ENCODE measurements at regions of chr7 and their contacts with region 1.

Region 1: GRCh38 chr7:97179454-97180104 is 62.1 kb downstream of the SDHAF3 start:
- DNase-seq: peak in 1 of 2 donors; percentile 34
- ATAC-seq: peak in 1 of 8 donors; percentile 60
- H3K4me3 ChIP-seq: no peak overlapping the region
- H3K27ac ChIP-seq: no peak overlapping the region
- H3K4me1 ChIP-seq: peaks cover 0 to 7% (median 0%) of the 10 kb centered on the region in 9 donors
- H3K27me3 ChIP-seq: no peaks in the 10 kb centered on the region
- CTCF ChIP-seq: peak; percentile 51 to 91 (median 84)

Region 2: DNA sequence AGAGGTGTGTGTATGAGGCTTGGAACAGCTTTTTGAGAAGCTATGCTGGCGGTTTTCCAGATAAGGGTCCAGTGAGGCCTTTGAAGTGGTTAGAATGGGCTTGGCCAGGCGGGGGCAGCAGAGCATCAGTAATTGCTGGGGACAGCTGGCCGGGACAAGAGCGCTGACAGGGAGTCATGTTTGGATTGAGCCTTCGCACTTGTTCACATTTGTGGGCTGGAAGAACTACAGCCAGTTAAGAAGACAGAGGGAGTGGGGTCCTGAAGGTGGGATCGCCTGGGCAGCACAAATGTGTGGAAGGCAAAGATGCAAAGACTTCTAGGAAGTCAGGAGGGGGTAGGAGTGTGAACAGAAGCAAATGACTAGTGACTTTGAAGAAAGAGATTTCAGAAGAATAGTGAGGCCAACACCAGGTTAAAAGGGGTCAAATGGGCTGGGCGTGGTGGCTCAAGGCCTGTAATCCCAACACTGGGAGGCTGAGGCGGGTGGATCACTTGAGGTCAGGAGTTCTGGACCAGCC is 74.8 kb before region 1 on chr7:
- intact Hi-C with region 1: loop called (anchors 1 to 5 kb)
- DNase-seq: peak; percentile 87 to 88
- ATAC-seq: peak; percentile 87 to 98 (median 91)
- H3K4me3 ChIP-seq: no peak overlapping the region
- H3K27ac ChIP-seq: no peak overlapping the region
- H3K4me1 ChIP-seq: peaks cover 0 to 10% (median 0%) of the 10 kb centered on the region in 9 donors
- H3K27me3 ChIP-seq: peaks cover 0 to 5% (median 4%) of the 10 kb centered on the region in 7 donors
- CTCF ChIP-seq: peak; percentile 63 to 90 (median 80)

Region 3: DNA sequence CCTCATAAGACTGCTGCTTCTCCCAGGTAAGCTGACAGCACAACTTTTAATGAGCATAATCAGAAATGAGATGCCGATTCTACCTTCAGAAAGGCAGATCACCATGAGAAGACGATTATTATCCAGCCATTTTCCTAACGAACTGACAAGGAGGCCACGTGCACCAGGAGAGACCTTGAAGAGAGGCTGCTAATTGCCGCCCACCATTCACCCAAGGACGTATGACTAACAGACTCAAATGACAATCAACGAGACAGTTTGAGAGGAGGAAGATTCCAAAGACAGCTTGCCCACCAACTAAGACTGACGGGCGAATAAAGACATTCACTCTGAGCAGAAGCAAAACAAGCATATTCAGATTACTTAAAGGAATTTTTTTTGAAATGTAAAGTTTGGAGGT is 250.4 kb after region 1 on chr7:
- intact Hi-C with region 1: no loop called
- DNase-seq: no peak
- ATAC-seq: no peak
- H3K4me3 ChIP-seq: no peak overlapping the region
- H3K27ac ChIP-seq: no peak overlapping the region
- H3K4me1 ChIP-seq: no peaks in the 10 kb centered on the region
- H3K27me3 ChIP-seq: no peaks in the 10 kb centered on the region
- CTCF ChIP-seq: no peak